ENCODE measurements at regions of chr9 and their contacts with region 1.

Region 1: GRCh38 chr9:34665381-34666250 is 3.2 kb upstream of the CCL27 start:
- DNase-seq: peak; percentile 95 to 96
- ATAC-seq: peak; percentile 90 to 95 (median 92)
- H3K4me3 ChIP-seq: peak overlapping the region; percentile 45 to 95 (median 72)
- H3K27ac ChIP-seq: peak overlapping the region; percentile 77 to 100 (median 97)
- H3K4me1 ChIP-seq: peaks cover 0 to 29% (median 14%) of the 10 kb centered on the region in 9 donors
- H3K27me3 ChIP-seq: no peaks in the 10 kb centered on the region
- CTCF ChIP-seq: no peak

Region 2: GRCh38 chr9:34647651-34648050 is 18.0 kb before region 1 on chr9:
- intact Hi-C with region 1: loop called in 1 of 10 experiments (anchors 2 kb)
- DNase-seq: no peak
- ATAC-seq: no peak
- H3K4me3 ChIP-seq: peak overlapping the region; percentile 52 to 93 (median 72)
- H3K27ac ChIP-seq: peak overlapping the region in 9 of 10 donors; percentile 84 to 97 (median 92)
- H3K4me1 ChIP-seq: peaks cover 9 to 46% (median 39%) of the 10 kb centered on the region in 9 donors
- H3K27me3 ChIP-seq: no peaks in the 10 kb centered on the region
- CTCF ChIP-seq: no peak